ENCODE measurements at regions of chr6 and their contacts with region 1.

Region 1: GRCh38 chr6:127266178-127266891 is at the start of gene RNF146:
- DNase-seq: peak; percentile 74
- H3K4me3 Mint-ChIP-seq: peak within 1 kb of the TSS; percentile 100
- H3K27ac Mint-ChIP-seq: peak within 1 kb of the TSS; percentile 96
- H3K4me1 Mint-ChIP-seq: peaks cover 31% of the 10 kb centered on the region
- H3K27me3 Mint-ChIP-seq: peaks cover 7% of the 10 kb centered on the region

Region 2: GRCh38 chr6:127291495-127291894 is 25.2 kb after region 1 on chr6:
- CTCF ChIA-PET with region 1: interaction called, 26 read pairs
- DNase-seq: no peak
- H3K4me3 Mint-ChIP-seq: no peak overlapping the region
- H3K27ac Mint-ChIP-seq: no peak overlapping the region
- H3K4me1 Mint-ChIP-seq: peaks cover 20% of the 10 kb centered on the region
- H3K27me3 Mint-ChIP-seq: no peaks in the 10 kb centered on the region